GM12878 (cell line): ENCODE measurements at regions of chr11 and their contacts with region 1.

Region 1: DNA sequence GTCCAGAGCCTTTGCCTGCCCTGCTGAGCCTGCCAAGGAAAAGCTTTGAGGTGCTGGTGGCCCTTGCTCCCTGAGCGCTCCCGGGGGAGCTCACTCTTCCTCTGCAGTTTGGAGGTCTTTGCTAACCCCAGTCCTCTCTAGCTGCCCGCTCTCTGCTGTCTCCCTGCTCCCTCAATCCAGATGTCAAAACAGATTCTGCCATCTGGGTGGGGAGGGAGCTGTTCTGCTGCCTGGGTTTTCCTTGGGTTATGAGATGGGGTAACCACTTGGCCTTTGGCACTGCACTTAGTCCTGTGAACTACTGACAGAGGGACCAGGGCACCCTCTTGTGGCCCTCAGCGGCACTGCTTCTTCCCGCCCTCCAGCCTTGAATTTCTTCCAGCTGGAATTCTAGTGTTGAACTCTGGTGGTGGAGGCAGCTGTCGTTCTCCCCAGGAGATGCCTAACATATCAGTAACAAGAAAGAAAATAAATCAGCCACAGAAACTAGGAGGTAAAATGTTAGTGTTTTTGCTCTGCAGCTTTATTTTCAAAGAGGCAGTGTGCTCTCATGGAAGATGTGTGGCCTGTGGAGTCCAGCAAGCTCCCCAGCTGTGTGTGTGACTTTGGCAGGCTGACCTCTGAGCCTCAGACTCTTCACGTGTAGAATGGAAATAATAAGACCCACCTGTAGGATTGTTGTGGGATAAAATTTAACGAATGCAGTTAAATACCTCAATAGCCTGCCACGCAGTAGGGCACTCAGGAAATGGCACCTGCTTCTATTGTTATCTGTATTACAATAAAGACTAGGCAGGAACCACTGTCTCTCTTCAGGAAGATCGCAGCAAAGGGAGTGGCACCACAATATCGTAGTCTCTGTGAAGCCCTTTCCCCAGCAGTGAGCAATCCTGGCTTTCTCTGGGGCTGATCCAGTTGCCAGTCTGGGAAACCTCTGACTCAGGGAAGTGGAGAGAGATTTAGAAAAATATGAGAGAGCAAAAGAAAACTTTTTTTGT is 23.4 kb downstream of the ARFGAP2 start:
- DNase-seq: peak; percentile 7
- ATAC-seq: peak; percentile 90
- H3K4me3 ChIP-seq: no peak overlapping the region
- H3K27ac ChIP-seq: no peak overlapping the region
- H3K4me1 ChIP-seq: no peaks in the 10 kb centered on the region
- H3K27me3 ChIP-seq: no peaks in the 10 kb centered on the region
- CTCF ChIP-seq: peak; percentile 94 to 99 (median 96); a peak in 5 of 6 replicates
- EP300 ChIP-seq: no peak
- POLR2A ChIP-seq: no peak
- RAD21 ChIP-seq: peak; percentile 97

Region 2: GRCh38 chr11:46876471-46876870 is 276.8 kb before region 1 on chr11:
- CTCF ChIA-PET with region 1: interaction called, 10 read pairs
- POLR2A ChIA-PET with region 1: no interaction called
- RAD21 ChIA-PET with region 1: no interaction called
- SMC1A ChIA-PET with region 1: interaction called, 4 read pairs
- in situ Hi-C with region 1: no loop called
- intact Hi-C with region 1: no loop called
- DNase-seq: no peak
- ATAC-seq: no peak
- H3K4me3 ChIP-seq: no peak overlapping the region
- H3K27ac ChIP-seq: no peak overlapping the region
- H3K4me1 ChIP-seq: no peaks in the 10 kb centered on the region
- H3K27me3 ChIP-seq: peaks cover 0 to 2% of the 10 kb centered on the region in 2 experiments; a peak in 2 of 4 replicates
- CTCF ChIP-seq: no peak
- EP300 ChIP-seq: no peak
- POLR2A ChIP-seq: no peak
- RAD21 ChIP-seq: no peak

Region 3: DNA sequence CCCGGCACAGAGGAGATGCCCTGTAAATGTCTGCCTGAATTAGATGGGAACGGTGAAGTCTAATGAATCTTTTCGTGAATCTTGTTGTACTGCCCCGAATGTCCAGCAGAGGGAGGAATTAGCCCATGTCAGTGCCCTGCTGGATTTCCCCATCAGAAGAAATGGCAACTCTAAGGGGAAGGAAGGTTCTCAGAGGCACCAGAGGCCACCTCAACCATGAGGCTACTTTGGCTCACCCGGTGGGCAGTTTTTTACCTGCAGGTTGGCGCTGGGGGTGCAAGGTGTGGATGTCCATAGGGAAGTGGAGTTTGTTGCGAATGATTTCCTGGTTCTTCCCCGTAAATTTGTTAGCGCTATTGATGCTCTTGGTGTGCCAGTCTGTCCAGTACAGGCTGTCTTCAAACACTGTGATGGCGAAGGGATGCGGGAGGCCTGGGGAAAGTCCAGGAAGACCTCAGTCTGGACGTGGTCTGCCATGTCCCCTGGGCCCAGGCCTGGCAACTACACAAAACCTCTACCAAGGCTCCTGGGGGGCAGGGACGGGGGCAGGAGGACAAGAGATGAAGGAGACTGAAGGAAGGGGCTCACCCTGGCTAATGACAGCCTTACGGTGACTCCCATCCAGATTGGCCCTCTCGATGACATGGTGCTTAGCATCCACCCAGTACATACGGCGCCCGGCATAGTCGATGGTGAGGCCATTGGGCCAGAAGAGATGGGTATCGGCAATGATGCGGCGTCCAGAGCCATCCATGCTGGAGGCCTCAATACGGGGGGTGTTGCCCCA is 263.4 kb before region 1 on chr11:
- CTCF ChIA-PET with region 1: interaction called, 63 read pairs
- POLR2A ChIA-PET with region 1: no interaction called
- RAD21 ChIA-PET with region 1: interaction called, 29 read pairs
- SMC1A ChIA-PET with region 1: interaction called, 44 read pairs
- in situ Hi-C with region 1: no loop called
- intact Hi-C with region 1: loop called (anchors 1 kb)
- DNase-seq: peak; percentile 32
- ATAC-seq: peak; percentile 95
- H3K4me3 ChIP-seq: no peak overlapping the region
- H3K27ac ChIP-seq: no peak overlapping the region
- H3K4me1 ChIP-seq: no peaks in the 10 kb centered on the region
- H3K27me3 ChIP-seq: no peaks in the 10 kb centered on the region; a peak in 1 of 4 replicates
- CTCF ChIP-seq: peak; percentile 88 to 95 (median 92); a peak in 5 of 6 replicates
- EP300 ChIP-seq: no peak
- POLR2A ChIP-seq: no peak
- RAD21 ChIP-seq: peak; percentile 100

Region 4: DNA sequence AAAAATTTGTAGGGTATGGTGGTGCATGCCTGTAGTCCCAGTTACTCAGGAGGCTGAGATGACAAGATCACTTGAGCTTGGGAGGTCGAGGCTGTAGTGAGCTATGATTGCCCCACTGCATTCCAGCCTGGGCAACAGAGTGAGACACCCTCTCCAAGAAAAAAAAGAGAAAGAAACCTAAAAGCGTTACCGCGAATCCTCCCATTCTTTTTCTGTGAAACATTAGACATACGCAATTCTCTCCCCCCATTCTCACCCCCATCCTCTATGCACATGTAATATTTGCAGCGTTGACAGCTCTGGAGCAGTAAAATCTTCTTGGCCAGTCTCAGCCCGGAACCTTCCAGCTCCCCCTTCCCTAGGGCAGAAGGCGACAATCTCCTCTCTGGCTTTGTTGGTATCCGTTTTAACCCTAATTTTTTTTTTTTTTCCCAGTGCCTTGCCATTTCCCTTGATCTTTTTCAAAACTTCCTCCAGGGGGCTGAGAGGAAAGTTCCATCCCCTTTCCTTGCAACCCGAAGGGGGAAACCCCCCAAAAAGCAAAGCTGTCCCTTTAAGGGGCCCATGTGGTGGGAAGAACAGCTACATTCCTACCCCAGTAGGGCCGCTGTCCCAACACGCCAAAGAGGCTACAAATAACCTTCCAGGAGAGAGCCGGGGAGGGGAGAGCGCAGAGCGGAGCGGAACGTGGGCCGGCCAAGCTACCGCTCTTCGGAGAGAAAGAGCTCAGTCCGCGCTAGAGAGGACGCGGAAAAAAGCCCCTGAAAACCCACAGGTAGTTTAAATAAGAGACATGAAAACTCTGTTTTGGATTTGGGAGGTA is 236.8 kb before region 1 on chr11:
- CTCF ChIA-PET with region 1: interaction called, 39 read pairs
- POLR2A ChIA-PET with region 1: no interaction called
- RAD21 ChIA-PET with region 1: interaction called, 17 read pairs
- SMC1A ChIA-PET with region 1: interaction called, 19 read pairs
- in situ Hi-C with region 1: no loop called
- intact Hi-C with region 1: loop called (anchors 1 kb)
- DNase-seq: no peak
- ATAC-seq: peak; percentile 32; the same call in 2 of the 3 replicates
- H3K4me3 ChIP-seq: peak overlapping the region; percentile 40; the same call in 1 of the 2 replicates
- H3K27ac ChIP-seq: no peak overlapping the region
- H3K4me1 ChIP-seq: peaks cover 6% of the 10 kb centered on the region; the same call in 1 of the 2 replicates
- H3K27me3 ChIP-seq: peaks cover 6 to 28% of the 10 kb centered on the region in 2 experiments
- CTCF ChIP-seq: 0 out of 6 replicates have a peak, but pooled peaks of 1 of the 3 experiments have one; percentile 1
- EP300 ChIP-seq: no peak
- POLR2A ChIP-seq: no peak
- RAD21 ChIP-seq: no peak

Region 5: GRCh38 chr11:46966773-46967172 is 186.5 kb before region 1 on chr11:
- CTCF ChIA-PET with region 1: interaction called, 11 read pairs
- POLR2A ChIA-PET with region 1: no interaction called
- RAD21 ChIA-PET with region 1: interaction called, 4 read pairs
- SMC1A ChIA-PET with region 1: interaction called, 6 read pairs
- in situ Hi-C with region 1: no loop called
- intact Hi-C with region 1: no loop called
- DNase-seq: no peak
- ATAC-seq: no peak
- H3K4me3 ChIP-seq: no peak overlapping the region
- H3K27ac ChIP-seq: no peak overlapping the region
- H3K4me1 ChIP-seq: no peaks in the 10 kb centered on the region
- H3K27me3 ChIP-seq: no peaks in the 10 kb centered on the region
- CTCF ChIP-seq: no peak
- EP300 ChIP-seq: no peak
- POLR2A ChIP-seq: no peak
- RAD21 ChIP-seq: no peak

Region 6: DNA sequence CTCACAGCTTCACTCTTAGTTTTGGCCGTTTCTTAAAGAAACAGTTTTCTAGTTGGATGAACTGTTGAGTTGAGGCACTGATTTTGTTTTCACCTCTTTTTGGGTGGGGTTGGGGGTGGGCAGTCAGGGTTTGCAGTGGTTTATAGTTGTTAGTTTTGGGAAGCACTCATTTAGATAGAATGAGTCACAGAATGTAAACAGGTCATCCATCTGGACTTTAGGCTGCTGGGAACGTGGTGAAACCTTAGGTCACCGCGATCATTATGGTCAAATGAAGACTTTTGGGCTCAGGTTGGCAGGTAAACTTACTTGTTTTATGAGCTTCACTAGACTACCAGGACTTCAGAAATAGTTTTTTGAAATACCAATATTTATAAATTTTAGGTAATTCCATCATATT is 168.3 kb before region 1 on chr11:
- CTCF ChIA-PET with region 1: interaction called, 11 read pairs
- POLR2A ChIA-PET with region 1: no interaction called
- RAD21 ChIA-PET with region 1: no interaction called
- SMC1A ChIA-PET with region 1: interaction called, 3 read pairs
- in situ Hi-C with region 1: no loop called
- intact Hi-C with region 1: no loop called
- DNase-seq: no peak
- ATAC-seq: no peak
- H3K4me3 ChIP-seq: no peak overlapping the region
- H3K27ac ChIP-seq: no peak overlapping the region
- H3K4me1 ChIP-seq: no peaks in the 10 kb centered on the region
- H3K27me3 ChIP-seq: no peaks in the 10 kb centered on the region
- CTCF ChIP-seq: no peak
- EP300 ChIP-seq: no peak
- POLR2A ChIP-seq: no peak
- RAD21 ChIP-seq: no peak

Region 7: GRCh38 chr11:47001781-47002181 is 151.5 kb before region 1 on chr11:
- CTCF ChIA-PET with region 1: interaction called, 11 read pairs
- POLR2A ChIA-PET with region 1: no interaction called
- RAD21 ChIA-PET with region 1: interaction called, 4 read pairs
- SMC1A ChIA-PET with region 1: interaction called, 6 read pairs
- in situ Hi-C with region 1: no loop called
- intact Hi-C with region 1: no loop called
- DNase-seq: no peak
- ATAC-seq: no peak
- H3K4me3 ChIP-seq: no peak overlapping the region
- H3K27ac ChIP-seq: no peak overlapping the region
- H3K4me1 ChIP-seq: peaks cover 32% of the 10 kb centered on the region
- H3K27me3 ChIP-seq: no peaks in the 10 kb centered on the region
- CTCF ChIP-seq: no peak
- EP300 ChIP-seq: no peak
- POLR2A ChIP-seq: no peak
- RAD21 ChIP-seq: no peak